SK-N-SH (cell line): ENCODE measurements at regions of chr2 and their contacts with region 1.

Region 1: GRCh38 chr2:119724656-119725485 is 34.9 kb upstream of the PTPN4 start:
- DNase-seq: no peak
- H3K4me3 ChIP-seq: no peak overlapping the region
- H3K27ac ChIP-seq: no peak overlapping the region
- H3K4me1 ChIP-seq: no peaks in the 10 kb centered on the region
- H3K27me3 ChIP-seq: no peaks in the 10 kb centered on the region
- CTCF ChIP-seq: no peak
- EP300 ChIP-seq: no peak
- RAD21 ChIP-seq: no peak

Region 2: GRCh38 chr2:118954297-118955060 is 770.4 kb before region 1 on chr2:
- CTCF ChIA-PET with region 1: no interaction called
- POLR2A ChIA-PET with region 1: no interaction called
- DNase-seq: no peak
- H3K4me3 ChIP-seq: no peak overlapping the region
- H3K27ac ChIP-seq: no peak overlapping the region
- H3K4me1 ChIP-seq: no peaks in the 10 kb centered on the region
- H3K27me3 ChIP-seq: no peaks in the 10 kb centered on the region; the same call in 1 of the 2 replicates
- CTCF ChIP-seq: no peak
- EP300 ChIP-seq: no peak
- RAD21 ChIP-seq: no peak

Region 3: DNA sequence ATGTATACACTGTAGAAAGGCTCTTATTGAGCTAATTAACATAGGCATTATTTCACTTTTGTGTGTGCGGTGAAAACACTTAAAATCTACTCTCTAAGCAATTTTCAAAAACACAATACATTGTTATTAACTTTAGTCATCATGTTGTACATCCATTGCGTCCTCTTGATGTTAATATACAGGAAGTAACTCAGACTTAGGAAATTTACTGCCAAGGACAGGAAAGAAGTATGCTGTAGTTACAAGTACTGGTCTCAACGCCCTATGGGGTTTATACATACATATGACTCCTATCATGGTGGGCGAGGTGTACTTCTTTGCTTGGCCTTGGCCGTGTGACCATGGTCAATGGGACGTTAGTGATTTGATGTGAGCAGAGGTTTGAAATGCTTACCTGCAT is 216.1 kb before region 1 on chr2:
- CTCF ChIA-PET with region 1: no interaction called
- POLR2A ChIA-PET with region 1: no interaction called
- DNase-seq: no peak
- H3K4me3 ChIP-seq: no peak overlapping the region
- H3K27ac ChIP-seq: no peak overlapping the region
- H3K4me1 ChIP-seq: no peaks in the 10 kb centered on the region
- H3K27me3 ChIP-seq: no peaks in the 10 kb centered on the region
- CTCF ChIP-seq: no peak
- EP300 ChIP-seq: no peak
- RAD21 ChIP-seq: no peak

Region 4: DNA sequence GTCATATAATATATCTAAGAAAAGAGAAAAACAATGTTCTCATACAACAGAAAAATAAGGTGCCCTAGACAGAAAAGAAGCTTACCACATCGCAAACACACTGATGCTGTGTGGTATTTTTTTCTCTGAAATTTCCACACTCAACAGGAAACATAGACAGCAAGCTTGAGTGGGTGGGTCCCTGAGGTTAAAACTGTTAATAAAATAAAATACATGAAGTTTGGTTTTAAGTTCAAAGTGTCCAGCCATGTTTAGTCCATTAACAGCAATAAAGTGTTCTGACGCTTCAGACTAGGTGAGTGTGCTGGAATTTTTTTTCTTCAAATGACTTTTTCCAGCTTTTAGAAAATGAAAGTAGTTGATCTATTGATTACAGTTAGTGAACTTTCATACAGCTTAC is 204.7 kb after region 1 on chr2:
- CTCF ChIA-PET with region 1: no interaction called
- POLR2A ChIA-PET with region 1: interaction called, 12 read pairs
- DNase-seq: no peak
- H3K4me3 ChIP-seq: no peak overlapping the region
- H3K27ac ChIP-seq: no peak overlapping the region
- H3K4me1 ChIP-seq: no peaks in the 10 kb centered on the region
- H3K27me3 ChIP-seq: no peaks in the 10 kb centered on the region
- CTCF ChIP-seq: no peak
- EP300 ChIP-seq: no peak
- RAD21 ChIP-seq: no peak

Region 5: DNA sequence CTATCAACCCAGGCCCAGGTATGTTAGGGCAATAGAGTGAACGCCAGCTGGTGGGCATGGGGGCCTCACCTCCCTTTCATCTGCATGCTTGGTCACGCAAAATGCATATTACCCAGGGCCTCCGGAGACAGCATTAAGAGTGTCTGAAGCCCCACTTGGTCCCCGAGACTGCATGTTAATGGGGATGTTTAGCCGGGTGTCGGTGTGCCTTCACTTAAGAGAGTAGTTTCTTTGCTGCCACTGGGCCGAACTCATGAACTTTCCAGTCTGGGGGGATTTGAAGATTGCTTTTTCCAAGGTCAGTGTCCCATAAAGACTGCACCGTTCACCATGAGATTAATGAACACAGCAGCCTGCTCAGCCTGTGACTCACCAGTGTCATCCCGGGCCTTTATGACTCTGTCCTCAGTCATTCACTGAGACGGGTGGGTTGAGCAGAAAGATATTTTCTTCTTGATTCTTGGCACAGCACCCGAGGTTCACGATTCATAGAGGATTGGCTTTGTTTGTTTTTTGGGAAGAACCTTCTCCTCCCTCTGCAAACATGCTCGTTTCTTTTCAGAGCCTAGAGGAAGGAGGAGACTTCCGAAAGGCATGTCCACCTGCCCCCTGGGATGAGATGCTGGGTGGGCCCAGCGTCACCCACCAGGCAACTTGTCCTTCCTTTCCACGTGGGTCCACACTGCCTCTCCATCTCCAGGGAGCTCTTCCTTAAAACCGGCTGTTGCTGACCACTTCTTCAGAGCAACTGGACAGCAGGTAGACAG is 1209.9 kb after region 1 on chr2:
- CTCF ChIA-PET with region 1: no interaction called
- POLR2A ChIA-PET with region 1: no interaction called
- DNase-seq: no peak
- H3K4me3 ChIP-seq: no peak overlapping the region; a peak in 1 of 4 replicates
- H3K27ac ChIP-seq: peak overlapping the region; percentile 95 to 96
- H3K4me1 ChIP-seq: peaks cover 55 to 73% of the 10 kb centered on the region in 2 experiments
- H3K27me3 ChIP-seq: no peaks in the 10 kb centered on the region
- CTCF ChIP-seq: no peak
- EP300 ChIP-seq: peak in 1 of 2 experiments; percentile 85; a peak in 1 of 4 replicates
- RAD21 ChIP-seq: no peak